GM13977 (cell line): ENCODE measurements at regions of chr10 and their contacts with region 1.

Region 1: DNA sequence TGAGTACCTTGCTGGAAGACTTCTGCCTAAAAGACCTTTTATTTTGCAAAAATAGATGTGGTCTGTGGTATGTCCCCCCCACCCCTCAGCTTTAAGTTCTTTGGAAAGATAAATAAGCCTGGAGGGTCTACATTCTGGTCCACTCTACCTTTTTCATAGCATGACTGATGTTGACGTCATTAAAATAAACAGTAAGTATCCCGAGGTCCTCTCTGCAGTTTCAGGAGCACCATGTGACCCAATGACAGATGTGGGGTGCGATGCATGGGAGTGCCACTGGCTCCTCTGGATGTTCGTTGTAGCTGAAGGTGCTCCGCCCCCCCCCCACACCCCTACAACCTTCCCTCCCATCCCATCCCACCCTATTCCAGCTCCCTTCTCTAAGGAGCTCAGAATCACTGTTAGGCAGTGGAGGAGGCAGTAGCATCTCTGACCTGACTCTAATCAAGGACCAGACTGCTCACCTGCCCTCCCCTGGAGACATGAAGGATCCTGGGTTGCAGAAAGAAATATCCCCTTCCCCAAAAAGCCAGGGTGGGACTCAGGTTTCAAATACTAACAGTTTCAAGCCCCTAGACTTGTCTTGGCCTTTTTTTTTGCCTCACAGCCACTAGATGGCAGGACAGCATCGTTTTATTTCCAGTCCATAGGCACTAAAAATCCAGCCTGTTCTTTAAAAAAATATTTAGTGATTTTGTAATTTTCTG is 25.1 kb downstream of the CASP7 start:
- DNase-seq: peak; percentile 25
- CTCF ChIP-seq: peak; percentile 68

Region 2: GRCh38 chr10:114103284-114103683 is 398.5 kb after region 1 on chr10:
- in situ Hi-C with region 1: loop called (anchors 25 kb)
- DNase-seq: peak; percentile 69
- CTCF ChIP-seq: peak; percentile 63

Region 3: DNA sequence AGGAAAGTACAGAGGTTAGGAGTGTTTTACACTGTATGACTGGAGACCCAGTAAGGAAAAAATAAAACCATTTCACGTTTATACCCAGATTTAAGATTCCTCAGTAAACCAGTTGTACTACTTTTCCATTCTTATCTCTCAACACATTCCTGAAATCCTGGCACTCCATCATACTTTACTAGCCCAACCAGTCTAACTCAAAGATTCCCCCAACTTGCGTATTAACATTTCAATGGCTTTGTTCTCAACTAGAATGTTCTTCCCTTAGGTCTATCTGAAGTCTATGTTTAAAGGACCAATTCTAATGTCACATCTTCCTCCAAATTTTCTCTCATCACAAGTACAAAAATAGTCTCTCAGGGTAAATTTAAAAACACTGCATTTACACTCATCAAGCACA is 461.3 kb after region 1 on chr10:
- in situ Hi-C with region 1: no loop called
- DNase-seq: no peak
- CTCF ChIP-seq: no peak